Activated B cell treated with CpG ODN at 0.5 μM for 24 hours (primary cell): ENCODE measurements at regions of chr2 and their contacts with region 1.

Region 1: DNA sequence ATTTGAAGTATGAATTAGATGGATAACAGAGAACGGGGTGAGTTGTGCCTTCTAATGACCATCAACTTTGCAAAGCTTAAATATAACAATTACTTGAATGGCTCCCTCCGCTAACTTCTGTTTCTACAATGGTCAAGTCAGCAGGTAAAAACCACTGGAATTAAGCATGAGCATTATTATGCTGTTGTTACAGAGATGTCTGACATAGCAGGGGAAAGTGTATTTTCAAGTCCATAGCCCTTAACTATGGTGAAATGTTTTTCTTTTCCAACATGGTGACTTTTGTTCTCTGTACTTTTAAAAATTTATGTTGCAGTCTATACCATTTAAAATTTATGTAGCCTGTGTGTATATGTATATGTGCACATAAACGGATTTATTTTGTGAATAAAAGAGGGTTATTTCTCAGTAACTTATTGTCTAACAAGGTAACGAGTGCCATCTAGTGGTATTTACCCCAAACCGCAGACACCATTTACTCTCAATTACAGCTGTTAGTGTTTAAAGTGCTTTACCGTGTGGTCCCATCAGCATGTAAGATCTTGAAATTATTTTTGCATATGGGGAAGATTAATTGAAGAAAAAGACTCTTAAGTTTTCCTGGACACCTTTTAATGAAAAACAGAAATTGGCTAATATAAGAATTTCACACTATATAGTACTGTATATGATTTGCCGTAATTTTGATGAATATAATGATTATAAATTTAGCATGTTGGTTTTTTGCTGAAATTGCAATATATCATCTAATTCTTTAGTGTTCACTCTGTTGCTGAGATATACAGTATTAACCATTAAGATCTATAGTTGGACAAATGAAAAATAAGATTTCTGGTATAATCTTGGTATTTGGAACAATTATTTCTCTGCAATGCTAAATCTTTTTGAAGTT is 78.2 kb downstream of the UBE2E3 start:
- DNase-seq: no peak
- ATAC-seq: peak; percentile 56
- H3K4me3 Mint-ChIP-seq: no peak overlapping the region
- H3K27ac Mint-ChIP-seq: no peak overlapping the region
- H3K4me1 Mint-ChIP-seq: peaks cover 3% of the 10 kb centered on the region
- H3K27me3 Mint-ChIP-seq: no peaks in the 10 kb centered on the region
- CTCF ChIP-seq: peak; percentile 90

Region 2: GRCh38 chr2:180240774-180241173 is 817.9 kb before region 1 on chr2:
- CTCF ChIA-PET with region 1: interaction called, 36 read pairs
- POLR2A ChIA-PET with region 1: no interaction called
- intact Hi-C with region 1: loop called (anchors 1 kb)
- DNase-seq: no peak
- ATAC-seq: no peak
- H3K4me3 Mint-ChIP-seq: no peak overlapping the region
- H3K27ac Mint-ChIP-seq: no peak overlapping the region
- H3K4me1 Mint-ChIP-seq: no peaks in the 10 kb centered on the region
- H3K27me3 Mint-ChIP-seq: no peaks in the 10 kb centered on the region
- CTCF ChIP-seq: no peak

Region 3: GRCh38 chr2:180604077-180604476 is 454.5 kb before region 1 on chr2:
- CTCF ChIA-PET with region 1: interaction called, 3 read pairs
- POLR2A ChIA-PET with region 1: no interaction called
- intact Hi-C with region 1: loop called (anchors 2 kb)
- DNase-seq: no peak
- ATAC-seq: no peak
- H3K4me3 Mint-ChIP-seq: no peak overlapping the region
- H3K27ac Mint-ChIP-seq: no peak overlapping the region
- H3K4me1 Mint-ChIP-seq: no peaks in the 10 kb centered on the region
- H3K27me3 Mint-ChIP-seq: no peaks in the 10 kb centered on the region
- CTCF ChIP-seq: no peak

Region 4: GRCh38 chr2:180999274-180999964 is 59.2 kb before region 1 on chr2:
- CTCF ChIA-PET with region 1: no interaction called
- POLR2A ChIA-PET with region 1: no interaction called
- intact Hi-C with region 1: no loop called
- DNase-seq: no peak
- ATAC-seq: no peak
- H3K4me3 Mint-ChIP-seq: no peak overlapping the region
- H3K27ac Mint-ChIP-seq: no peak overlapping the region
- H3K4me1 Mint-ChIP-seq: no peaks in the 10 kb centered on the region
- H3K27me3 Mint-ChIP-seq: no peaks in the 10 kb centered on the region
- CTCF ChIP-seq: no peak